Activated CD4-positive, alpha-beta T cell treated with anti-CD3 and anti-CD28 coated beads for 36 hours (primary cell): ENCODE measurements at regions of chr16 and their contacts with region 1.

Region 1: GRCh38 chr16:50152807-50153452 is at the start of gene TENT4B:
- DNase-seq: peak; percentile 92
- ATAC-seq: peak; percentile 71
- H3K4me3 Mint-ChIP-seq: peak within 1 kb of the TSS; percentile 79
- H3K27ac Mint-ChIP-seq: peak within 1 kb of the TSS; percentile 98
- H3K4me1 Mint-ChIP-seq: peaks cover 39% of the 10 kb centered on the region
- H3K27me3 Mint-ChIP-seq: no peaks in the 10 kb centered on the region
- total RNA-seq, gene TENT4B: 19.3 to 22.4 TPM

Region 2: GRCh38 chr16:50065624-50066481 is 87.1 kb before region 1 on chr16 and contains the start of gene HEATR3:
- CTCF ChIA-PET with region 1: no interaction called
- POLR2A ChIA-PET with region 1: interaction called, 3 read pairs
- intact Hi-C with region 1: loop called (anchors 1 kb)
- DNase-seq: peak; percentile 97
- ATAC-seq: peak; percentile 86
- H3K4me3 Mint-ChIP-seq: peak within 1 kb of the TSS; percentile 87
- H3K27ac Mint-ChIP-seq: peak within 1 kb of the TSS; percentile 88
- H3K4me1 Mint-ChIP-seq: peaks cover 33% of the 10 kb centered on the region
- H3K27me3 Mint-ChIP-seq: no peaks in the 10 kb centered on the region
- total RNA-seq, gene HEATR3: 22.2 to 28.7 TPM

Region 3: GRCh38 chr16:50172195-50172922 is 19.4 kb after region 1 on chr16:
- CTCF ChIA-PET with region 1: interaction called, 8 read pairs
- POLR2A ChIA-PET with region 1: no interaction called
- intact Hi-C with region 1: loop called (anchors 2 kb)
- DNase-seq: no peak
- ATAC-seq: peak; percentile 75
- H3K4me3 Mint-ChIP-seq: no peak overlapping the region
- H3K27ac Mint-ChIP-seq: peak overlapping the region; percentile 44
- H3K4me1 Mint-ChIP-seq: peaks cover 69% of the 10 kb centered on the region
- H3K27me3 Mint-ChIP-seq: no peaks in the 10 kb centered on the region

Region 4: GRCh38 chr16:50266337-50267091 is 113.6 kb after region 1 on chr16 and contains the start of gene ADCY7:
- CTCF ChIA-PET with region 1: no interaction called
- POLR2A ChIA-PET with region 1: no interaction called
- intact Hi-C with region 1: loop called in 1 of 2 experiments (anchors 2 kb)
- DNase-seq: peak; percentile 92
- ATAC-seq: peak; percentile 83
- H3K4me3 Mint-ChIP-seq: peak within 1 kb of the TSS; percentile 87
- H3K27ac Mint-ChIP-seq: peak within 1 kb of the TSS; percentile 98
- H3K4me1 Mint-ChIP-seq: peaks cover 70% of the 10 kb centered on the region
- H3K27me3 Mint-ChIP-seq: no peaks in the 10 kb centered on the region
- total RNA-seq, gene ADCY7: 51.8 to 85.3 TPM

Region 5: GRCh38 chr16:50368410-50369132 is 215.6 kb after region 1 on chr16 and contains the start of gene BRD7:
- CTCF ChIA-PET with region 1: no interaction called
- POLR2A ChIA-PET with region 1: no interaction called
- intact Hi-C with region 1: loop called in 1 of 2 experiments (anchors 1 kb)
- DNase-seq: peak; percentile 82
- ATAC-seq: peak; percentile 73
- H3K4me3 Mint-ChIP-seq: peak within 1 kb of the TSS; percentile 89
- H3K27ac Mint-ChIP-seq: peak within 1 kb of the TSS; percentile 86
- H3K4me1 Mint-ChIP-seq: peaks cover 41% of the 10 kb centered on the region
- H3K27me3 Mint-ChIP-seq: no peaks in the 10 kb centered on the region
- total RNA-seq, gene BRD7: 87.7 to 104 TPM

Region 6: GRCh38 chr16:50741808-50742575 is 589.1 kb after region 1 on chr16 and contains the start of gene CYLD:
- CTCF ChIA-PET with region 1: no interaction called
- POLR2A ChIA-PET with region 1: no interaction called
- intact Hi-C with region 1: loop called (anchors 1 to 10 kb)
- DNase-seq: peak; percentile 100
- ATAC-seq: peak; percentile 91
- H3K4me3 Mint-ChIP-seq: peak within 1 kb of the TSS; percentile 93
- H3K27ac Mint-ChIP-seq: peak within 1 kb of the TSS; percentile 95
- H3K4me1 Mint-ChIP-seq: peaks cover 42% of the 10 kb centered on the region
- H3K27me3 Mint-ChIP-seq: no peaks in the 10 kb centered on the region
- total RNA-seq, gene CYLD: 72.4 to 92.8 TPM